Esophagus squamous epithelium (tissue), 5 donors: ENCODE measurements at regions of chr17 and their contacts with region 1.

Region 1: DNA sequence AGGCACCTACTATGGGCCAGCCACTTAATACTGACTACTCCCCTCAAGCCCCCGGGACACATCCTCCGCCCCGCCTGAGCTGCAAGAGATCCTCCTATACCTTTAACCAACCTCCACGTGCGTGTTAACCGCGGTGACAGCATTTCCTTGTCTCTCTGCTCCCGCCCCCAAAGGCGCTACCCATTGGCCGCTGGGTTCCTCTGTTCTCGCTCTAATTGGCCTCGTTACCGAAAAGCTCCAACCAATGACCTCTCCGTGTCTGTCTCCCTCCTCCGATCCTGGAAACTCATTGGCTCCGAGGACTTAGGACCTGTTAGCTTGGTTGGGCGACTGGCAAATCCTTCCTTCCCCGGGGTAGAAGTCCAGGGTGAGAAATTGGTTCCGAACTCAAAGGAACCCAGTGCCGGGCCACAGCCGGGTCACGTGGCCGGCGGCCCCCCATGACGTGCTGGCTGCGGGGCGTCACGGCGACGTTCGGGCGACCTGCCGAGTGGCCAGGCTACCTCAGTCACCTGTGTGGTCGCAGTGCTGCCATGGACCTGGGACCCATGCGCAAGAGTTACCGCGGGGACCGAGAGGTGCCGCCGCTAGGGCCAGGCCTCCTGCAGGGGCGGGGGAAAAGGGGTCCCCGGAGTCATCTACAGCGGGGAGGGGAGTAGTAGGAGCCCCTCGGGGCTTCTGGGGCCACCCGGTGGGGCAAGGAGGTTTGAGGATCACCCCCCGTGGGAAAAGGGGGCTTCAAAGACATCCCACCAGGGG is at the start of gene PNPO:
- DNase-seq: peak; percentile 79
- H3K4me3 ChIP-seq: peak within 1 kb of the TSS; percentile 68 to 97 (median 86)
- H3K27ac ChIP-seq: peak within 1 kb of the TSS; percentile 83 to 91 (median 89)
- H3K4me1 ChIP-seq: peaks cover 15 to 57% (median 19%) of the 10 kb centered on the region in 3 donors
- H3K27me3 ChIP-seq: no peaks in the 10 kb centered on the region
- CTCF ChIP-seq: peak in 3 of 6 experiments; percentile 5 to 32 (median 22)
- POLR2A ChIP-seq: peak in 3 of 4 donors; percentile 19 to 58 (median 36)
- total RNA-seq, gene PNPO: 25.6 to 38.6 (median 34.2) TPM

Region 2: DNA sequence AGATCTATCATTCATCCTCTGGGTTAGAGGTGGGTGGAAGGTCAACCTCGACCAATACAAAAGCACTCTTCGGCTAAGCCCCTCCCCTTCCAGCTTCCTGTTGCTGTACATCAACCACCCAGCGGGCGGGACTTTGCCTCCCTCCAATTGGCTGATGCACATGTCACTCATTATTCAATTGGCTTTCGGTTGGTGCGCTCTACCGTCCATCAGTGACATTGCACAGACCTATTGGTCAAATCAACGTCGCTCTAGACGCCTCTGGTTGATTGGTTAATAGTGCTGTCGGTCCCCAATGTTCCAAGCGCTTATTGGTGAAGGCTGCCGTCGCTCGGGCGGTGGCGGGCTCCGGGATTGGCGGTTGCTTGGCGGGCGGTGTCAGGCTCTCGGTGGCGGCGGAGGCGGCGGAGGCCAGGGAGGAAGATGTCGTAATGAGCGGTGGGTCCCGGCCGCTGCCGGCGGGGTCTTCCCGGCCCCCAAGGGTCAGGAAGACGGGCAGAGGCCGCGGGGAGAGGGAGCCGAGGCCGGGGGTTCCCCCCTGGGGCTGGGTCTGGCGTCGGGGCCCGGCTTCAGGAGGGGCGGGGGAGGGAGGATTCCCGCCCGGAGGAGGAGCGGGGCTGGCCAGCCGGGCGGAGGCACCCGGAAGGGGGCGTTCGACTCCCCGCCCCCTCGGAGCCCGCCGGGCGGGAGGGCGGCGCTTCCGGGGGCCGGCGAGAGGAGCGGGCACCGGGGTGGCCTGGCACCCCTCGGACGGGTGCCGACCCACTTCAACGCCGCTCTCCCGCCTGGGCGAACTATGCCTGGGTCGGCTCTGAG is 45.4 kb before region 1 on chr17 and contains the start of gene SP2:
- intact Hi-C with region 1: loop called (anchors 5 kb)
- DNase-seq: peak; percentile 98
- H3K4me3 ChIP-seq: peak within 1 kb of the TSS; percentile 77 to 88 (median 82)
- H3K27ac ChIP-seq: peak within 1 kb of the TSS; percentile 99 to 100 (median 100)
- H3K4me1 ChIP-seq: peaks cover 17 to 64% (median 22%) of the 10 kb centered on the region in 3 donors
- H3K27me3 ChIP-seq: no peaks in the 10 kb centered on the region
- CTCF ChIP-seq: peak in 2 of 6 experiments; percentile 7 to 14
- POLR2A ChIP-seq: peak in 2 of 4 donors; percentile 80 to 83
- total RNA-seq, gene SP2: 4.0 to 9.9 (median 9.2) TPM